ENCODE measurements at regions of chr10 and their contacts with region 1.

Region 1: DNA sequence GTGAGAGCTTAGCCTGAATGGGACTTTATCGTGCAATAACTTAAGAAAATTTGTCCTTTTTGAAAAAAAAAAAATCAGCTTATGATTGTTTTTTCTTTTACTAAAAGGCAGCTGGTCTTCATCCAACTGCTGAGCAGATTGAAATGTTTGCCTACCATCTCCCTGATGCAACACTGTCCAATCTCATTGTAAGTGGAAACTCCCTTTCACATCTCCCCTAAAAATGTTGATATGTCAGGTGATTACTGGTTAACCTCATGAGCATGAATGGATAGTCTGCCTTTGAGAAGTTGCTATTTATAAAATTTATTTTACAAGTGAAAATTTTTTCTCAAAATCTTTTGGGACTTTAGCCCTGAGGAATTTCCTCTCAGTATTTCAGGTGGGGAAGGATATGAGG is 17.8 kb upstream of the HKDC1 start:
- DNase-seq: no peak
- H3K4me3 Mint-ChIP-seq: peak overlapping the region; percentile 54
- H3K27ac Mint-ChIP-seq: peak overlapping the region; percentile 73
- H3K4me1 Mint-ChIP-seq: peaks cover 42% of the 10 kb centered on the region
- H3K27me3 Mint-ChIP-seq: no peaks in the 10 kb centered on the region

Region 2: GRCh38 chr10:69146759-69147158 is 55.6 kb before region 1 on chr10:
- intact Hi-C with region 1: no loop called
- DNase-seq: no peak
- H3K4me3 Mint-ChIP-seq: no peak overlapping the region
- H3K27ac Mint-ChIP-seq: no peak overlapping the region
- H3K4me1 Mint-ChIP-seq: peaks cover 14% of the 10 kb centered on the region
- H3K27me3 Mint-ChIP-seq: no peaks in the 10 kb centered on the region

Region 3: GRCh38 chr10:69179743-69180524 is 22.4 kb before region 1 on chr10 and contains the start of gene SUPV3L1:
- intact Hi-C with region 1: loop called (anchors 1 kb)
- DNase-seq: peak; percentile 83
- H3K4me3 Mint-ChIP-seq: peak within 1 kb of the TSS; percentile 99
- H3K27ac Mint-ChIP-seq: peak within 1 kb of the TSS; percentile 100
- H3K4me1 Mint-ChIP-seq: peaks cover 26% of the 10 kb centered on the region
- H3K27me3 Mint-ChIP-seq: no peaks in the 10 kb centered on the region
- total RNA-seq, gene SUPV3L1: 52.8 and 53.1 TPM in 2 replicates